ENCODE measurements at regions of chr2 and their contacts with region 1.

Region 1: GRCh38 chr2:230712443-230713330 is at the start of gene CAB39:
- DNase-seq: peak; percentile 75 to 96
- H3K4me3 ChIP-seq: peak within 1 kb of the TSS; percentile 93
- CTCF ChIP-seq: no peak
- POLR2A ChIP-seq: peak in 1 of 2 donors; percentile 39
- total RNA-seq, gene CAB39: 65.5 to 74.7 (median 70.4) TPM

Region 2: DNA sequence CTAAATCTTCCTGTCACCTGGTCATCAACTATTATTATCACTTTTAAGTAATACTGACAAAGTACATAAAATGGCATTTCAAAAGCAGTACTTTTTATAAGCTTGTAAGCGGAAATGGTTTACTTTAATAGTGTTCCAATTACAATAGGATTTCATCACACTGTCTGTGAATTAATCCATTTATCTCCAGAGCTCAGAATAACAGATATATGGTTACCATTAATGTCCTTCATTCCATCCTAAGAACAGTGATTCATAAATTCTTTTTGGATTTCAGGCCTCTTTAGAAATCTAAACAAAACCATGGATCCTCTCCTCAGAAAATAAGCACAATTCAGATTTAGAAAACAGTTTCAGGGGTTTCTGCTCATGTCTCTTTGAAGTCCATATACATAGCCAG is 1510.0 kb before region 1 on chr2:
- intact Hi-C with region 1: no loop called
- DNase-seq: no peak
- H3K4me3 ChIP-seq: no peak overlapping the region
- CTCF ChIP-seq: no peak
- POLR2A ChIP-seq: no peak

Region 3: GRCh38 chr2:230798769-230799399 is 86.2 kb after region 1 on chr2:
- intact Hi-C with region 1: loop called (anchors 10 kb)
- DNase-seq: no peak
- H3K4me3 ChIP-seq: no peak overlapping the region
- CTCF ChIP-seq: no peak
- POLR2A ChIP-seq: no peak